ENCODE measurements at regions of chr19 and their contacts with region 1.

Region 1: GRCh38 chr19:17075035-17075863 is at the starts of genes HAUS8 and MYO9B:
- DNase-seq: peak; percentile 100
- H3K4me3 ChIP-seq: peak within 1 kb of the TSS; percentile 73
- H3K27ac ChIP-seq: peak within 1 kb of the TSS; percentile 92
- H3K4me1 ChIP-seq: peaks cover 8% of the 10 kb centered on the region
- H3K27me3 ChIP-seq: no peaks in the 10 kb centered on the region
- CTCF ChIP-seq: no peak
- total RNA-seq, gene HAUS8: 66.4 and 68.1 TPM in 2 replicates
- total RNA-seq, gene MYO9B: 85.2 and 85.4 TPM in 2 replicates

Region 2: GRCh38 chr19:16628183-16628983 is 446.9 kb before region 1 on chr19 and contains the start of gene MED26:
- CTCF ChIA-PET with region 1: no interaction called
- POLR2A ChIA-PET with region 1: no interaction called
- intact Hi-C with region 1: loop called (anchors 5 kb)
- DNase-seq: peak; percentile 96
- H3K4me3 ChIP-seq: peak within 1 kb of the TSS; percentile 100
- H3K27ac ChIP-seq: peak within 1 kb of the TSS; percentile 98
- H3K4me1 ChIP-seq: peaks cover 15% of the 10 kb centered on the region
- H3K27me3 ChIP-seq: no peaks in the 10 kb centered on the region
- CTCF ChIP-seq: no peak
- total RNA-seq, gene MED26: 13.4 and 15.6 TPM in 2 replicates

Region 3: DNA sequence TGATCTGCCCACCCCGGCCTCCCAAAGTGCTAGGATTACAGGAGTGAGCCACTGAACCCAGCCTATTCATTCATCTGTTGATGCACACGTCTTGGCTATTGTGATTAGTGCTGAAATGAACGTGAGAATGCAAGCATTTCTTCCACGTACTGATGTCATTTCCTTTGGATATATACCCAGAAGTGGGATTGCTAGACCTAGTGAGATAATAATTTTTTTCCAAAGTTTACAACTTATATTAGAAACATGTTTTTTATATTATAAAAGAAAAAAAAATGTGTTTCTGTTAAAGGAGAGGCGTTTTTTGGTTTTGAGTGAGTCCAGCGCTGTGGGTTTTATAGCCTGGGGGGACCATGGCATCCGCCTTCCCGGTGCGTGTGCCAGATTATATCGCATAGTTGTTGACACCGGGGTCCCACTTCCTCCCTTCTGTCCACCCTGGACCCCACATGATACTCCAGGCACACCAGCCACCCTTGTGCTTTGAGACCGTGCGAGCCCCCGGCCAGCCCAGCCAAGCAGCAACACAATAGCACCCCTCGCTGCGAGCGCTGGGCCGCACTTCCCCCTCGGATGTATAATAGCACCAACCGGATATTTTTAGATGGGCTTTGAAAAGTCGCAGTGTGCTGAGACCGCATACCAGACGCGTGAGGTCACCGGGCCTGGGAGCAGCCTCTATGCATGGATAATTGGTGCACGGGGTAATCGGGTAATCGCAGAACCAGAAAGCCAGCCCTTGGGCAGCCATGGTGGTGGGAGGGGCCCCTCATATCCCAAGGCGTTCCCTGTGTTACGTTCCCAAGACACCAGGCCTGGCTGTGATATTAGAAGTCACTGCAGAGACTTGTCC is 60.0 kb after region 1 on chr19:
- CTCF ChIA-PET with region 1: no interaction called
- POLR2A ChIA-PET with region 1: no interaction called
- intact Hi-C with region 1: loop called (anchors 5 kb)
- DNase-seq: peak; percentile 99
- H3K4me3 ChIP-seq: peak overlapping the region; percentile 29
- H3K27ac ChIP-seq: peak overlapping the region; percentile 92
- H3K4me1 ChIP-seq: peaks cover 23% of the 10 kb centered on the region
- H3K27me3 ChIP-seq: no peaks in the 10 kb centered on the region
- CTCF ChIP-seq: no peak